Spleen (tissue), 13 donors: ENCODE measurements at regions of chr22 and their contacts with region 1.

Region 1: DNA sequence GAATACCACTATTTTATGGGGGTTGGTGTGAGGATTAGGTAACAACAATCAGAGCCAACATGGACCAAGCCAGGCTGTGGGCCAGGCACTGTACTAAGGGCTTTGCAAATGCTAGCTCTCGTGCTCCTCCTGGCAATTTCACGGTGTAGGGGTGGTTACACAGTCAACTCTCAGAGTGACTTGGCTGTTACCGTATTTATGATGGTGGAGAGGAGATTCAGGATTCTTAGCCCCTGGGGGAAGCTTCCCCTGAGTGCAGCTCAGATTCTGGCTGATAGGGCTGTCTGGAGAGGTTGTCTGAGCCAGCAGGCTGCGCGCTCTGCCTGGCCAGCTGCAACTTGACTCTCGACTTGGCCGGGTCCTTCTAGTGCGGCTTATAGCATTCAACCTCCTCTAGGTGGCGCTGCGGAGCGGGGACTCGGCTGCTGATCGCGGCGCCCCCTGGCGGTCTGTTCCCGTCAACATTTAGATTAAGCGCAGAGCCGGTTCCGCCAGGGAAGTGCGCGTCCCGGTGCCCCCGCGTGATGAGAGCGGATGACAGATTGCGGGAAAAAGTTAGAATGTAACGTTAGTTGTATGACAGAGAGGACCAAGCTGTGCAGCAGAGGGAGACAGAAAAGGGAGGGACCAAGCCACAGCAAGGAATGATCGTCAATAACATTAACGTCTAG is 4.5 kb upstream of the NCF4 start:
- DNase-seq: peak; percentile 98
- H3K4me3 ChIP-seq: peak overlapping the region in 1 of 8 donors; percentile 48
- H3K27ac ChIP-seq: peak overlapping the region in 3 of 8 donors; percentile 32 to 96 (median 94)
- H3K4me1 ChIP-seq: peaks cover 2 to 70% (median 31%) of the 10 kb centered on the region in 6 donors
- H3K27me3 ChIP-seq: no peaks in the 10 kb centered on the region
- CTCF ChIP-seq: peak; percentile 99 to 100 (median 100)
- POLR2A ChIP-seq: no peak

Region 2: DNA sequence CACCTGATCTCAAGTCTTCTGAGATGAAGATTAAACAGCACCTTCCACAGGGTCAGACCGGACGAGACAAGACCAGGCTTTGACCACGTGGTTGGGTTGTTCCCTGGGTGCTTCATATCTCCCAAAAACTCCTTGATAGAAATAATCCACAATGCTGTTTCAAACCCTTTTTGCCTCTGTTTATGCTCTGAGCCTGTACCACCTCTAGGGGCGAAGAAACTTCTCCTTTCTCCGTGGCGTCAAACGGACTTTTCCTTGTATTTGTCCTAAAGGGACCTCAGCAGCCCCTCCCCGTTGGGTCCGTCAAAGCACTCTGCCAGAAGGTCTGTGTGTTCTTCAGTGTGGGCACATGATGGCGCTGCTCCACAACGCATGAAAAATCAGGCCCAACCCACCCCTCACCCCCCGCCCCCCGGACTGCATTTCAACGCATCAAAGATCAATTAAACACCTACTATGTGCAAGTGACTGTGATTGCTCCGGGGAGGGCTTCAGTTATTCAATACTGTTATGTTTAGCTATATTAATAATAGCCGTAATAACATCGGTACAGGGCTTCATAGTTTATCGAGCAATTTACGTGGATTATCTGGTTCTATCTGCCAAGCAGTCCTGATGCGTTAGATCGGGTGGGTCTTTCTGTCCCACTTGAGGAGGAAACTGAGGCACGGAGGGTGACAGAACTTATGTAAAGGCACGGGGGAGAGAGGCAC is 310.0 kb before region 1 on chr22:
- intact Hi-C with region 1: loop called (anchors 5 kb)
- DNase-seq: no peak
- H3K4me3 ChIP-seq: no peak overlapping the region
- H3K27ac ChIP-seq: no peak overlapping the region
- H3K4me1 ChIP-seq: peaks cover 0 to 24% (median 2%) of the 10 kb centered on the region in 6 donors
- H3K27me3 ChIP-seq: peaks cover 0 to 42% (median 0%) of the 10 kb centered on the region in 7 donors
- CTCF ChIP-seq: peak in 10 of 11 experiments; percentile 9 to 63 (median 46)
- POLR2A ChIP-seq: no peak

Region 3: GRCh38 chr22:36762687-36763260 is 93.5 kb before region 1 on chr22:
- intact Hi-C with region 1: loop called (anchors 5 kb)
- DNase-seq: peak; percentile 43
- H3K4me3 ChIP-seq: no peak overlapping the region
- H3K27ac ChIP-seq: no peak overlapping the region
- H3K4me1 ChIP-seq: peaks cover 0 to 2% (median 0%) of the 10 kb centered on the region in 6 donors
- H3K27me3 ChIP-seq: no peaks in the 10 kb centered on the region
- CTCF ChIP-seq: no peak
- POLR2A ChIP-seq: no peak

Region 4: DNA sequence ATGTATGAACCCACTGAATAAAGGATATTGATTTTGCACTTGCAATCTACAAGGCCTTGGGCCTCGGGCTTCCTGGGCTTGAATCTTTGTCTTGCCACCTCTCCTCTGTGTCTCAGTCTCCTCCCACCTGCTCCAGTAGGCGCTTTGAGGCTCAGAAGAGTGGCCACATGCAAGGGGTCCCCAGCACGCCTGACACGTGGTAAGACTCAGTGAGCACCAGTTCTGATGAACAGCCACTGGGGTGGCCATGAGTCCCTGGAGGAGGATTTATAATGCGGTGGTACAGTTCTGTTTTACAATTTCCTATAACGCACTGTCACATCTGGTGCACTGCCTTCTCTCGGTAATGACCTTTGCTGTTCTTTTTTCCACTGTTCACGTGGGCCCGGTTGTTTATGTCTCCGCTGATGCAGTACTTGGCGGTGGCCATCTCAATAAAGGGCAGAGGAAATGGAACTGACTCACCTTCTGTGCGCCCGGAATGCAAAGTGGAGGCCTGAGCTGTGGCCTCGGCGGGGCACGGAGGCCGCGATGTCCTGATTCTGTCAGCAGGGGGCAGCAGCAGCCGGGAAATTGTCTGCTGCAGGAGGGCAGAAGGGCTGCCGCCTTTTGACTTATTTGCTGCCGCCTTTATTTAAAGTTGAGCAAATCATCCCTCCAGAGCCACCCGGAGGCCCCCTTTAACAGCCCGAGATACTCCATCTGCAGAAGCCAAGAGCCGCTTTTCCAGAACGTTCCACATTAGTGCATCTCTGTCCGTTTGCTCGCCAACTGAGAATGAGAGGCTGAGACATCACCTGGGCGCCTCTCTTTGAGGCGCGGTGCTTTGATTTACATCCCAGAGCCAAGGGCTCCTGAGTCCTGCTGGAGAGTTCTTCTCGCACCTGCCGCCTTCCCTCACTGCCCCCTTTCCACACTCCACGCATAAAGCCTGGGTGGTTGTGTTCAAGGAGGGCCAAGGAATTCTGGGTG is 74.3 kb before region 1 on chr22:
- intact Hi-C with region 1: loop called (anchors 5 kb)
- DNase-seq: peak; percentile 95
- H3K4me3 ChIP-seq: no peak overlapping the region
- H3K27ac ChIP-seq: peak overlapping the region in 4 of 8 donors; percentile 21 to 66 (median 36)
- H3K4me1 ChIP-seq: peaks cover 4 to 18% (median 10%) of the 10 kb centered on the region in 6 donors
- H3K27me3 ChIP-seq: peaks cover 0 to 15% (median 0%) of the 10 kb centered on the region in 7 donors
- CTCF ChIP-seq: peak; percentile 92 to 99 (median 97)
- POLR2A ChIP-seq: no peak

Region 5: DNA sequence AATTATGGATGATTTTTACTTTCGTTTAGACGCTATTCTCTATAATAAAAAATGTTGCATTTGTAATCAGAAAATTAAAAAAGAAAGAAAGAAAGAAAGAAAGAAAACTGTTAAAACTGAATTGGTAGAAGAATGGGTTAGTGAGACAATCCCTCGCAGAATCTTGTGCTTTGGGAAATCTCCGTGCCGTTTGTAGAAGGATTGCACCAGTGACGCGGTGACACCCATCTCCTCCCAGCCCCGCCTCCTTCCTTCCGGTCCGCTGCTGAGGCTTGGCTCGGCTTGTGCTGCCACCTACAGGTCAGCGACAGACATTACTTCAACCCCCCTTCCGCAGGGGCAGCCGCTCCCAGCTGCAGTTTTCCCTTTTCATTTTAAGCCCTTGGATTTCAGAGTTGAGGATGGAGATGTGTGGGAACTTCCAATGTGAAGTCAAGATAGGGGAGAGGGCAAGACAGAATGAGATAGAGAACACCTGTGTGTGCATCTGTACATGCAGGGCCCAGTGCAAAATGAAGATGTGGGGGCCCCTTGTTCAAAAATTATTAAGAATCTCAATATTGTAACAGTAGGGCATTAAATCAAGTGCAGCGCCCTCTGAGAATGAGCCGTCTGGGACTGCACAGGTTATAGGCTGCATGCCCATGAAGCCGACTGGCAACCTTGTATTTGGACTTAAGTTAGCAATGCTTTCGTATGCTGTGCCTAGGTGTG is 121.8 kb after region 1 on chr22:
- intact Hi-C with region 1: loop called (anchors 2 kb)
- DNase-seq: peak; percentile 97
- H3K4me3 ChIP-seq: peak overlapping the region; percentile 3 to 66 (median 40)
- H3K27ac ChIP-seq: peak overlapping the region in 7 of 8 donors; percentile 59 to 88 (median 76)
- H3K4me1 ChIP-seq: peaks cover 0 to 19% (median 10%) of the 10 kb centered on the region in 6 donors
- H3K27me3 ChIP-seq: peaks cover 0 to 20% (median 0%) of the 10 kb centered on the region in 7 donors
- CTCF ChIP-seq: peak; percentile 92 to 98 (median 96)
- POLR2A ChIP-seq: no peak

Region 6: GRCh38 chr22:37726241-37726887 is 870.1 kb after region 1 on chr22:
- intact Hi-C with region 1: no loop called
- DNase-seq: no peak
- H3K4me3 ChIP-seq: no peak overlapping the region
- H3K27ac ChIP-seq: no peak overlapping the region
- H3K4me1 ChIP-seq: peaks cover 0 to 32% (median 6%) of the 10 kb centered on the region in 6 donors
- H3K27me3 ChIP-seq: no peaks in the 10 kb centered on the region
- CTCF ChIP-seq: no peak
- POLR2A ChIP-seq: no peak